SK-N-SH (cell line): ENCODE measurements at regions of chrX and their contacts with region 1.

Region 1: DNA sequence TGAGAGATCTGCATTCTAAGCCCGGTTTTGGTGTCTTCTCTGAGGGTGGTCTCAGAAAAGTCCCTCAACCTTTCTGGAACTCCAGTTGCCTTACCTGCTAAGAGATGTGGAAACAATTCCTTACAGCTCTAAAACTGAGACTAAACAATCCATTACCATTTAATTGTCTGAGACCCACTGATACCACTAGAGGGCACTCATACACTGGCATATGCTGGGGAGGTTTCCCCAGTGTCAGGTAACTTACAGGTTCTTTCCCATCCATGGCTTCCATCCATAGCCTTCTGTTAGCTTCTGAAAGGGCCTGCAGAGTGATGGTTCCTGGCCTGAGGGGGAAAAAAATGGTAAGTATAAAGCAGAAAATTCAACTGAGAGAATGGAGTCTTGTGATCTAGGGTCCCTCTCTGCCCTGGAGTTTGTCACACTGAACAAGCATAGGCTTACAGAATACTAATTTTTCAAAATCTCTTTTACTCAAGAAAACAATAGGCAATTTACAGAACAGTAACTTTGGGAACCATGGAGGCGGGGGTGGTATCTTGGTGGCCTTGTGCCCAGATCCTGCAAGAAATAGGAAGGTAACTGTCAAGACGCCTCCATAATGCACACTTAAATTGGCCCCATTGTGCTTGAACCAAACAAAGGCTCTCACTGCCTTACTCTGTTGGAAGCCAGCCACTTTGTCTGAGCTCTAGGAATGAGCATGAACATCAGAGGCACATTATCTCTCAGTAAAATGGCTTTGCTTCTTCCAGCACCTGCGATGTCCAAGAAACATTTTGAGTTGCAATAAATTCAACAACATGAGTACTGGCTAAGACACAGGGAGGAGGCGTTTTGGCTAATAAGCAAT is 236.1 kb downstream of the OPHN1 start:
- DNase-seq: peak; percentile 58
- H3K4me3 ChIP-seq: no peak overlapping the region
- H3K27ac ChIP-seq: no peak overlapping the region
- H3K4me1 ChIP-seq: no peaks in the 10 kb centered on the region
- H3K27me3 ChIP-seq: no peaks in the 10 kb centered on the region
- CTCF ChIP-seq: peak; percentile 88
- EP300 ChIP-seq: no peak
- RAD21 ChIP-seq: peak; percentile 92

Region 2: GRCh38 chrX:68209008-68209407 is 11.8 kb after region 1 on chrX:
- CTCF ChIA-PET with region 1: interaction called, 15 read pairs
- POLR2A ChIA-PET with region 1: no interaction called
- DNase-seq: no peak
- H3K4me3 ChIP-seq: no peak overlapping the region
- H3K27ac ChIP-seq: no peak overlapping the region
- H3K4me1 ChIP-seq: no peaks in the 10 kb centered on the region
- H3K27me3 ChIP-seq: no peaks in the 10 kb centered on the region; the same call in 1 of the 2 replicates
- CTCF ChIP-seq: no peak
- EP300 ChIP-seq: no peak
- RAD21 ChIP-seq: no peak

Region 3: DNA sequence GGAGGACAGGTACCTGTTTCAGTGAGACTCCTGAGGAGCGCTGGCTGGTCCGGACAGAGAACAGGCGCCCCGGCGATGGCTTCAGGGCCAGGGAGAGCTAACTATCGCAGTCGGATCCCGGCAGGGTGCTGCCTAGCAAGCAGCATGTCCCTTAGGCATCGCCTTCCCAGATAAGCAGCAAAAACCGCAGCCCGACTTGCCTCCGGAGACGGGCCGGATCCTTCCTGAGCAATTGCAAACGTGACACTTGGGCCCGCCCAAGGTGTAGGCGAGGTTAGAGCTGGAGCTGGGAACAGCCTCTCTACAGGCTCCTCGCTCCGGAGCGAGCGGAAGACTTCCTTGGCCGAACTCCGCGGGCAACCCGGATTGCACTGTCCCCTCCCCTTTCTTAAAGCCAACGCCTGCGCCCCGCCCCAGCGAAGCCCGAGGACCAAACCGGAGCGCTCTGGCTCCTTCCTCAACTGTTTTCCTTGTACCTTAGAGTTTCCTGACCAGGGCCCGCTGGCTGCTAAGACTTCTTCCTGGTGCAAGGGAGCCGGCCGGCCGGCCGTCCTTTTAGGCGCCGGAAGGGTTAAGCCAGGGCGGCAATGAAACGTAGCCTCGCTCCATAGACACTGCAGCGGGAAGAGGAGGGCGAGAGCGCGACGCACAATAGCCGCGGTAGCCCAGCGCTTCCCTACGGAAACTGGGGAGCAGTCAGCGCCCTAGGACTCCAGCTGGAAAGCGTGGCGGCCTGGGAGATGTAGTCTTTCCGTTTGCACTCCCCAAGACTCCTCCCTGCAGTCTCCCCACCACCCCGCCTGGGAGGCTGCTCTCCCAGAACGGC is 236.2 kb after region 1 on chrX and contains the start of gene OPHN1:
- CTCF ChIA-PET with region 1: interaction called, 11 read pairs
- POLR2A ChIA-PET with region 1: no interaction called
- DNase-seq: peak; percentile 70
- H3K4me3 ChIP-seq: peak within 1 kb of the TSS; percentile 55 to 68
- H3K27ac ChIP-seq: peak within 1 kb of the TSS; percentile 72 to 73
- H3K4me1 ChIP-seq: peaks cover 0 to 3% of the 10 kb centered on the region in 2 experiments; a peak in 1 of 4 replicates
- H3K27me3 ChIP-seq: no peaks in the 10 kb centered on the region; the same call in 1 of the 2 replicates
- CTCF ChIP-seq: no peak
- EP300 ChIP-seq: no peak
- RAD21 ChIP-seq: no peak
- polyA plus RNA-seq, gene OPHN1: 1.3 and 1.7 TPM in 2 replicates

Region 4: GRCh38 chrX:68462653-68463052 is 265.5 kb after region 1 on chrX:
- CTCF ChIA-PET with region 1: interaction called, 40 read pairs
- POLR2A ChIA-PET with region 1: no interaction called
- DNase-seq: no peak
- H3K4me3 ChIP-seq: no peak overlapping the region; a peak in 1 of 4 replicates
- H3K27ac ChIP-seq: no peak overlapping the region
- H3K4me1 ChIP-seq: no peaks in the 10 kb centered on the region
- H3K27me3 ChIP-seq: no peaks in the 10 kb centered on the region; the same call in 1 of the 2 replicates
- CTCF ChIP-seq: peak; percentile 71
- EP300 ChIP-seq: no peak
- RAD21 ChIP-seq: peak; percentile 69